ENCODE measurements at regions of chr20 and their contacts with region 1.

Region 1: DNA sequence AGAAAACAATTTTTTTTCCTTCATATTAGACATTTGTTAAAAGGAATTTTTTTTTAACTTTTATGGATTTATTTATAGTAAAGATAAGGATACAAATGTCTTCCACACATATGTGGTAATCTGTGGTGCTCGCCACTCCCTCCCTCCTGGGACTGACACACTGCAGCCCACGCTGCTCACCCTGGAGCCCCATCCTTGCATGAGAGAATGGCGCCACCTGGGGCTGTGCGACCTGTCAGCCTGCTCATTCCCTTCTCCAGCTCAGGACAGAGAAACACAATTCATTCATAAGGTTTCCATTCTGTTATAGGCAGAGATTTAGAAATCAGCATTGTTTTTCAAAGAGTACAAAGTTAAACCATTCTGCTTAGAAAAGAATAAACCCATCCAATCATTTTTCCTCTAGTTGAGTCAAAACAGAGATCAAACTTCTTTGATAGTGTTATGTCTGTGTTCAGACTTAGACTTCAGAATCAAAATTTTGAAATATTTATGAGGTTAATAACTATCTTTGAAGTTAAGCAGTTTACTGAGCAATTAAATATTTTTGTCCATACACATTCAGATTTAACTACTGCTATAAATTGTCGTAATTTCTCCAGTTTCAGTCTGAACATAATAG is 42.8 kb upstream of the DYNLRB1 start:
- DNase-seq: peak; percentile 44 to 66 (median 52)
- ATAC-seq: peak; percentile 75 to 90 (median 87)
- H3K4me3 ChIP-seq: no peak overlapping the region
- H3K27ac ChIP-seq: peak overlapping the region in 5 of 12 donors; percentile 3 to 21 (median 11)
- H3K4me1 ChIP-seq: peaks cover 0 to 29% (median 16%) of the 10 kb centered on the region in 12 donors
- H3K27me3 ChIP-seq: no peaks in the 10 kb centered on the region
- CTCF ChIP-seq: peak in 10 of 12 donors; percentile 12 to 56 (median 38)
- POLR2A ChIP-seq: no peak

Region 2: GRCh38 chr20:34190679-34191090 is 282.7 kb before region 1 on chr20:
- intact Hi-C with region 1: loop called in 1 of 10 experiments (anchors 10 kb)
- DNase-seq: peak; percentile 52 to 74 (median 65)
- ATAC-seq: peak; percentile 91 to 96 (median 94)
- H3K4me3 ChIP-seq: no peak overlapping the region
- H3K27ac ChIP-seq: no peak overlapping the region
- H3K4me1 ChIP-seq: peaks cover 0 to 5% (median 0%) of the 10 kb centered on the region in 12 donors
- H3K27me3 ChIP-seq: peaks cover 0 to 5% (median 0%) of the 10 kb centered on the region in 9 donors
- CTCF ChIP-seq: peak; percentile 49 to 82 (median 64)
- POLR2A ChIP-seq: no peak

Region 3: GRCh38 chr20:34522969-34523871 is 49.8 kb after region 1 on chr20:
- intact Hi-C with region 1: loop called in 1 of 10 experiments (anchors 10 kb)
- DNase-seq: no peak
- ATAC-seq: peak in 3 of 4 donors; percentile 26 to 48 (median 41)
- H3K4me3 ChIP-seq: no peak overlapping the region
- H3K27ac ChIP-seq: peak overlapping the region in 7 of 12 donors; percentile 22 to 62 (median 39)
- H3K4me1 ChIP-seq: peaks cover 4 to 65% (median 50%) of the 10 kb centered on the region in 12 donors
- H3K27me3 ChIP-seq: no peaks in the 10 kb centered on the region
- CTCF ChIP-seq: peak; percentile 14 to 60 (median 42)
- POLR2A ChIP-seq: no peak

Measured in heart left ventricle (tissue), 16 donors.